ENCODE measurements at regions of chr16 and their contacts with region 1.

Region 1: DNA sequence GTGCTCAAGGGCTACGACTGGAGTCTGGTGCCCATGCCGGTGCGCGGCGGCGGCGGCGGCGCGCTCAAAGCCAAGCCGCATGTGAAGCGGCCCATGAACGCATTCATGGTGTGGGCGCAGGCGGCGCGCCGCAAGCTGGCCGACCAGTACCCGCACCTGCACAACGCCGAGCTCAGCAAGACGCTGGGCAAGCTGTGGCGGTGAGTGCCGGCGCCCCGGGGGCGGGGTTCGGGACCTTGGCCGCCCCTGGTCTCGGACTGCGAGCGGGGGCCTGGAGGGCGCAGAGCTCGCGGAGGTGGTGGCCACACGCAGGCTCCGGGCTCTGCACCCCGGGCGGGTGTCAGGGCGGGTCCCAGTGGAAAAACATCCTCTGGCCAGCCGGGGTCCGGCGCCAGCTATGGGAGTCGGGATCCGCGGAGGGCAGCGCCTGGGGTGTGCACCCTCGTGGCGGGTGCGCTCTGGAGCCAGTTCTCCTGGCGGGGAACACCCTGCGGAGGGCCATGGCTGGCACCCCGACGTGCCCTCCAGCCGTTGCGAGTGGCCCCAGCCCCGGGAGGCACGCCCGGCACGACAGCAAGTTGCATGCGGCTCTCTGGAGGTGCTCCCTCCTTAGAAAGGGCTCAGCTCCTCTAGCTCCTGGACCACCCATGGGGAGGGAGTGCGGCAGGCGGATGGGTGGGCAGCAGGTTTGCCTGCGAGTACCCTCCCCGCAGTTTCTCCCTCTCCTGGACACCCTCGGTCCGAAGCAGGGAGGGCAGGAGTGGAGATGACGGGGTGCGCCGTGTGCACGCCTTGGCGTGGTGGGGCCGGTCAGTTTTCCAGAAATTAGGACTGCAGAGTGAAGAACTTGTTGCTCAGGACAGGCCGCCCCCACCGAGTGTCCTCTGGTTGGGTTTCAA is 824 bp downstream of the SOX8 start:
- DNase-seq: peak in 3 of 9 experiments; percentile 46 to 60 (median 46)
- ATAC-seq: peak; percentile 13
- H3K4me3 ChIP-seq: peak overlapping the region in 1 of 2 experiments; percentile 27
- H3K4me3 Mint-ChIP-seq: peak overlapping the region; percentile 73
- H3K27ac ChIP-seq: no peak overlapping the region
- H3K27ac Mint-ChIP-seq: no peak overlapping the region
- H3K4me1 ChIP-seq: peaks cover 22% of the 10 kb centered on the region
- H3K4me1 Mint-ChIP-seq: peaks cover 8% of the 10 kb centered on the region
- H3K27me3 ChIP-seq: peaks cover 0 to 10% of the 10 kb centered on the region in 2 experiments
- H3K27me3 Mint-ChIP-seq: no peaks in the 10 kb centered on the region
- CTCF ChIP-seq: no peak

Region 2: DNA sequence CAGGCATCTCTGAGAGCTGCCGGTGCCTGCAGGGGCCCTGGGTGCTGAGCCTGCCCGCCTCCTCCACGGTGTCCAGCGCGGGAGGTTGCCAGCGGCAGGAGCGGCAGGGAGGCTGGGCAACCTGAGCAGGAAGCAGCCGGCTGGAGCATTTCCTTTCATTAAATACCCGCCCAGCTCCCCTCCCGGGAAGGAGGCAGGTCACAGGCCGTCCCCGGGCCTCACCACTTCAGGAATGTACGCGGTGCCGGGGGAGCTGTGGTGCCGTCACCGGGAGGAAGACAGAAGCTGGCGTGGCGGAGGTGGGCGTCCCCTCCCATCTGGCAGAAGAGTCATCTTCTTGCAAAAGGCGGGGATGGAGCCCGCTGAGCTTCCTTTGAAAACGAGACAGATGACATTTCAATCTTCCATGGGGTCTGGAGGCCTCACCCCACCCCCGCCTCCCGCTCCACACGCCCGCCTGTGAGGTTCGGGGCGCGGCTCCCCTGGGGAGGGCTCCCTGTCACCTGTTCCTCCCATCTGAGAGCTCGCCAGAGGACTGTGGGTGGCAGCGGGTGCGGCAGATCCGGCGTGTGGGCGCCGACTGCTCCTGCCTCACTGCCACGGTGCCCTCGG is 15.2 kb after region 1 on chr16:
- CTCF ChIA-PET with region 1: interaction called, 6 read pairs
- POLR2A ChIA-PET with region 1: interaction called, 77 read pairs
- intact Hi-C with region 1: loop called (anchors 1 kb)
- DNase-seq: peak in 8 of 9 experiments; percentile 42 to 79 (median 74)
- ATAC-seq: peak; percentile 77
- H3K4me3 ChIP-seq: peak overlapping the region; percentile 62 to 86
- H3K4me3 Mint-ChIP-seq: peak overlapping the region; percentile 82
- H3K27ac ChIP-seq: peak overlapping the region; percentile 65 to 80
- H3K27ac Mint-ChIP-seq: peak overlapping the region; percentile 77
- H3K4me1 ChIP-seq: peaks cover 47% of the 10 kb centered on the region
- H3K4me1 Mint-ChIP-seq: peaks cover 33% of the 10 kb centered on the region
- H3K27me3 ChIP-seq: peaks cover 0 to 3% of the 10 kb centered on the region in 2 experiments
- H3K27me3 Mint-ChIP-seq: no peaks in the 10 kb centered on the region
- CTCF ChIP-seq: no peak

Region 3: DNA sequence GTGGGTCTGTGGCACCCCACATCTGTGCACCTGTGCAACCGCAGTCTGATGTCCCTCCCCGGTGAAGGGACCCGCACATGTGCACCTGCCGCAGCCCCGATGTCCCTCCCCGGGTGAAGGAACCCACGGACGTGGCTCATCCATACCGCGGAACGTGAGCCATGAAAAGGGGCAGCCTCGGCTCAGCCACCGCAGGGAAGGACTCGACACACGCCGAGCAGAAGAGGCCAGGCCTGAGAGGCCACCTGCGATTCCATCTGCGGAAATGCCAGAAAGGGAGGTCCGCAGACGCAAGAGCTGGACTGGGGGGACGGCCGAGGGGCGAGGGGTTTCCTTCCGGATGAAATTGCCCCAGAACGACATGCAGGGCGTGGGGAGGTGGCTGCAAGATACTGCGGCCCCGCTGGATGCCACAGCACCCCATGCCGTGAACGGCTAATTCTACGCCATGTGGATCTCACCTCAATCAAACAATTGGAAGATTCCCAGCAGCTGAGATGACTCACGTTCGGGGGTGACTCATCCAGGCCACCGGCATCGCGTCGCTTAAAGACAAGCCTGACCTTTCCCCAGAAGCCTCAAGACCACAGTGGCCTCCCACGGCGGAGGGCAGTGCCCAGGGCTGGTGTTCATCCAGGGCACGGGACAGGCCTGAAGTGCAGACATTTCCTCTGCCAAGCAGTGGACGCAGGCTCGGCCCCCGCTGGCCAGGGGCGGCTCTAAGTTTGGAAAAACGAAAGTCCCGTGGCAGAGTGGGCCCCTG is 20.2 kb after region 1 on chr16:
- CTCF ChIA-PET with region 1: interaction called, 6 read pairs
- POLR2A ChIA-PET with region 1: interaction called, 77 read pairs
- intact Hi-C with region 1: loop called (anchors 1 kb)
- DNase-seq: peak in 8 of 9 experiments; percentile 52 to 76 (median 66)
- ATAC-seq: peak; percentile 18
- H3K4me3 ChIP-seq: no peak overlapping the region
- H3K4me3 Mint-ChIP-seq: no peak overlapping the region
- H3K27ac ChIP-seq: no peak overlapping the region
- H3K27ac Mint-ChIP-seq: no peak overlapping the region
- H3K4me1 ChIP-seq: peaks cover 58% of the 10 kb centered on the region
- H3K4me1 Mint-ChIP-seq: peaks cover 38% of the 10 kb centered on the region
- H3K27me3 ChIP-seq: peaks cover 0 to 3% of the 10 kb centered on the region in 2 experiments
- H3K27me3 Mint-ChIP-seq: no peaks in the 10 kb centered on the region
- CTCF ChIP-seq: no peak